ENCODE measurements at regions of chr10 and their contacts with region 1.

Region 1: DNA sequence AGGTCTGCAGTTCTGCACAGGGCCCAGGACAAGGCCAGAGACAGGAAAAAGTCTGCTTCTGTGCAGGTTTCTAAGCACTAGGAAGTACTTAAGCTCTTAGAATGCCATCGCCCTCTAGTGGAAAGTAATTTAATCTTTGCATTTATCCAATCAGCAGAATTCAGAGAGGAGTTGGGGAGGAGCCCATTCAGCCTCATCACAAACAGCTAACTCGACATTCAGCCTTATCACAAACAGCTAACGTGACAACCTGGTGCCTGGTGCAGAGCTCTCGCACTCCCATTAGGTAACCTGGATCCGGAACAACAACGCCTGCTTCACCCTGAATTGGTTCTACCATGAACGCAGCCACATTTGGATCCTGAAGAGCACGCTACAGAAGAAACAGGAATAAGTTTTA is 15.2 kb downstream of the OAT start:
- DNase-seq: peak; percentile 47
- H3K4me3 Mint-ChIP-seq: no peak overlapping the region
- H3K27ac Mint-ChIP-seq: peak overlapping the region; percentile 69
- H3K4me1 Mint-ChIP-seq: peaks cover 10% of the 10 kb centered on the region
- H3K27me3 Mint-ChIP-seq: no peaks in the 10 kb centered on the region

Region 2: DNA sequence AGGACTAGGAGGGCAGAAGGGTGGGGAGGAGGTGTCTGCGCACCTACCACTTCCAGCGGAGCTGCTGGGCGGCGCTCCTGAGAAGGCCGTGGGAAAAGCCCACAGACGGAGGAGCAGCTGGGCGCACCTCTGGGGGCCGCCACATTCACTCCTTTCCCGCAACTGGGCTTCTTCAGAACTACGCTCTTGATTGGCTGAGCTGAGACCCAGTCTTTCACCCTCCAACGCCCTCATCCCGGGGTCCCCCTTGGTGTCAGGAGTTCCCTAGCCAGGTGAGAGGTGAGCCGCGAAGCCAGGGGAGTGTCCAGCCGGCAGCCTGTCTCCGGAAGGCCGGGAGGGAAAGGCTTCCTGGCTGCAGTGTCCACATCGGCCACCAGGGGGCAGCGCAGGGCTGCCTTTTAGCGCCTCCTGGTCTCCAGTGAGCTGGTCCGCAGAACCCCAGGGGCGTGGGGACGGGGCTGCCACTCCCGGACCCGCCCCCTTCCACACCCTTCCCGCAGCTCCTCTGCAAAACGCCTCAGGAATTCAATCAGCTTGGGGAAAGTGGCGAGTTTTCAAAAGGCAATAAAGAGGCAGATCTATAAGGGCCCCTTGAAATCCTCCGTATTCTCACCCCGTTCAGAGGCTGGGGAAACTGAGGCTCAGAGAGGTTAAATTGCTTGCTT is 409.0 kb before region 1 on chr10:
- CTCF ChIA-PET with region 1: interaction called, 34 read pairs
- DNase-seq: peak; percentile 84
- H3K4me3 Mint-ChIP-seq: no peak overlapping the region
- H3K27ac Mint-ChIP-seq: no peak overlapping the region
- H3K4me1 Mint-ChIP-seq: peaks cover 5% of the 10 kb centered on the region
- H3K27me3 Mint-ChIP-seq: peaks cover 83% of the 10 kb centered on the region

Region 3: DNA sequence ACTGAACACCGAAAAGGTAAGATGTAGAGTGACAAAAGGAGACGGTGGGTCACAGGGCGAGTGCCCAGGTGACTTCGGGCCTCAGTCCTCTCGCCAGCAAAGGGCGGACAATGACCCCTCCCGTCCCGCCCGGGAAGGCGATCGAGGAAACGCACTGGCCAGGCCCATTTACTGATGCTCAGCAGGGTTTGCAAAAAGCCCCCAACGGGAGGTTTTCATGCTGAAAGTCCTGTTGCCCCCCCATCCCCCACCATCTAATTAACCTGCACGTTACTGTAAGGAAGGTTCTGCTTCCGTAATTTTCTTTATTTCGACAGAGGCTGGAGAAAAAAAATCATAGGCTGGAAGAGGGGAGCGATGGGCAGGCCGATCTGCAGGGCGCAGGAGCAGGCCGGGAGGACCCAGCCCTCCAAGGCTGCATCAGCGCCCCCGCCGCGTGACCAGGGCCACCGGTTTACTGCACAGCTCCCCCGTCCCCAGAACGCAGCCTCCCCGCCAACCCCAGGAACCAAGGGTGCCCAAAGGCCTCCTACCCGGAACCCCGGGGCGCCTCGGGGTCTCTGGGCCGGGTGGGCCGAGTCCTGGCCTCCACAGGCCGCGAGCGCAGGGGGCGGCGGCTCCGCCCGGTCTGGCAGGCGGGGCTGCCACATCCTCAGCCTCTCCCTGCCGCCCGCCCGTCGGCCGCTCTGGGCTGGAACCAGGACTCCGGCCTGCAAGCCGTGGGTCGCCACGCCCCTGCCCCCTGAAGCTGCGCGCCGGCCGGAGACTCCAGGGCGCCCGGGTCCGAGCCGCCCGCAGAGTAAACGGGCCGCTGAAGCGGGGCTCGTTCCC is 14.6 kb after region 1 on chr10:
- CTCF ChIA-PET with region 1: interaction called, 15 read pairs
- DNase-seq: peak; percentile 70
- H3K4me3 Mint-ChIP-seq: peak overlapping the region; percentile 75
- H3K27ac Mint-ChIP-seq: no peak overlapping the region
- H3K4me1 Mint-ChIP-seq: peaks cover 17% of the 10 kb centered on the region
- H3K27me3 Mint-ChIP-seq: peaks cover 36% of the 10 kb centered on the region

Measured in activated naive CD4-positive, alpha-beta T cell treated with anti-CD3 and anti-CD28 coated beads, Interleukin-2, amount 10 ng/mL, durations not matched to agents 7 days and 5 days (primary cell).